ENCODE measurements at regions of chr7 and their contacts with region 1.

Region 1: GRCh38 chr7:155644178-155644970 is at the start of gene RBM33:
- DNase-seq: peak; percentile 78
- H3K4me3 Mint-ChIP-seq: peak within 1 kb of the TSS; percentile 87
- H3K27ac Mint-ChIP-seq: peak within 1 kb of the TSS; percentile 95
- H3K4me1 Mint-ChIP-seq: peaks cover 41% of the 10 kb centered on the region
- H3K27me3 Mint-ChIP-seq: no peaks in the 10 kb centered on the region
- total RNA-seq, gene RBM33: 65.5 to 66.3 TPM

Region 2: GRCh38 chr7:155205368-155206317 is 438.7 kb before region 1 on chr7:
- CTCF ChIA-PET with region 1: no interaction called
- intact Hi-C with region 1: loop called (anchors 10 kb)
- DNase-seq: peak; percentile 96
- H3K4me3 Mint-ChIP-seq: peak overlapping the region; percentile 69
- H3K27ac Mint-ChIP-seq: peak overlapping the region; percentile 92
- H3K4me1 Mint-ChIP-seq: peaks cover 35% of the 10 kb centered on the region
- H3K27me3 Mint-ChIP-seq: no peaks in the 10 kb centered on the region

Region 3: GRCh38 chr7:155660059-155660757 is 15.8 kb after region 1 on chr7:
- CTCF ChIA-PET with region 1: no interaction called
- intact Hi-C with region 1: loop called (anchors 1 kb)
- DNase-seq: peak; percentile 11
- H3K4me3 Mint-ChIP-seq: no peak overlapping the region
- H3K27ac Mint-ChIP-seq: peak overlapping the region; percentile 74
- H3K4me1 Mint-ChIP-seq: peaks cover 72% of the 10 kb centered on the region
- H3K27me3 Mint-ChIP-seq: no peaks in the 10 kb centered on the region

Region 4: GRCh38 chr7:155729834-155730233 is 85.5 kb after region 1 on chr7:
- CTCF ChIA-PET with region 1: no interaction called
- intact Hi-C with region 1: loop called (anchors 2 kb)
- DNase-seq: no peak
- H3K4me3 Mint-ChIP-seq: no peak overlapping the region
- H3K27ac Mint-ChIP-seq: no peak overlapping the region
- H3K4me1 Mint-ChIP-seq: peaks cover 52% of the 10 kb centered on the region
- H3K27me3 Mint-ChIP-seq: no peaks in the 10 kb centered on the region

Region 5: GRCh38 chr7:156640257-156640948 is 996.0 kb after region 1 on chr7 and contains the start of gene RNF32:
- CTCF ChIA-PET with region 1: no interaction called
- intact Hi-C with region 1: loop called (anchors 2 kb)
- DNase-seq: peak; percentile 98
- H3K4me3 Mint-ChIP-seq: peak within 1 kb of the TSS; percentile 78
- H3K27ac Mint-ChIP-seq: no peak within 1 kb of the TSS
- H3K4me1 Mint-ChIP-seq: peaks cover 10% of the 10 kb centered on the region
- H3K27me3 Mint-ChIP-seq: peaks cover 28% of the 10 kb centered on the region
- total RNA-seq, gene RNF32: 0.31 to 0.64 TPM

Region 6: GRCh38 chr7:157138424-157139110 is 1494.2 kb after region 1 on chr7 and contains the start of gene UBE3C:
- CTCF ChIA-PET with region 1: no interaction called
- intact Hi-C with region 1: loop called (anchors 2 kb)
- DNase-seq: peak; percentile 87
- H3K4me3 Mint-ChIP-seq: peak within 1 kb of the TSS; percentile 84
- H3K27ac Mint-ChIP-seq: peak within 1 kb of the TSS; percentile 92
- H3K4me1 Mint-ChIP-seq: peaks cover 38% of the 10 kb centered on the region
- H3K27me3 Mint-ChIP-seq: no peaks in the 10 kb centered on the region
- total RNA-seq, gene UBE3C: 52.9 to 55.7 TPM

Measured in activated naive CD4-positive, alpha-beta T cell treated with anti-CD3 and anti-CD28 coated beads for 36 hours (primary cell).